CD4-positive, alpha-beta memory T cell (primary cell): ENCODE measurements at regions of chr6 and their contacts with region 1.

Region 1: GRCh38 chr6:78611958-78612357 is 255.4 kb upstream of the IRAK1BP1 start:
- DNase-seq: no peak
- H3K4me3 ChIP-seq: no peak overlapping the region
- H3K4me3 Mint-ChIP-seq: no peak overlapping the region
- H3K27ac ChIP-seq: no peak overlapping the region
- H3K27ac Mint-ChIP-seq: no peak overlapping the region
- H3K4me1 ChIP-seq: no peaks in the 10 kb centered on the region
- H3K4me1 Mint-ChIP-seq: no peaks in the 10 kb centered on the region
- H3K27me3 ChIP-seq: no peaks in the 10 kb centered on the region
- H3K27me3 Mint-ChIP-seq: no peaks in the 10 kb centered on the region

Region 2: GRCh38 chr6:77466055-77466450 is 1145.9 kb before region 1 on chr6:
- CTCF ChIA-PET with region 1: no interaction called
- POLR2A ChIA-PET with region 1: no interaction called
- intact Hi-C with region 1: loop called (anchors 2 kb)
- DNase-seq: peak in 2 of 5 donors; percentile 8 to 12
- H3K4me3 ChIP-seq: peak overlapping the region; percentile 33 to 42
- H3K4me3 Mint-ChIP-seq: peak overlapping the region; percentile 85 to 96 (median 88)
- H3K27ac ChIP-seq: no peak overlapping the region
- H3K27ac Mint-ChIP-seq: peak overlapping the region in 4 of 7 donors; percentile 28 to 64 (median 48)
- H3K4me1 ChIP-seq: peaks cover 9% of the 10 kb centered on the region
- H3K4me1 Mint-ChIP-seq: peaks cover 12 to 42% (median 24%) of the 10 kb centered on the region in 4 donors
- H3K27me3 ChIP-seq: peaks cover 14% of the 10 kb centered on the region
- H3K27me3 Mint-ChIP-seq: peaks cover 31 to 32% of the 10 kb centered on the region in 2 donors